ENCODE measurements at regions of chr15 and their contacts with region 1.

Region 1: DNA sequence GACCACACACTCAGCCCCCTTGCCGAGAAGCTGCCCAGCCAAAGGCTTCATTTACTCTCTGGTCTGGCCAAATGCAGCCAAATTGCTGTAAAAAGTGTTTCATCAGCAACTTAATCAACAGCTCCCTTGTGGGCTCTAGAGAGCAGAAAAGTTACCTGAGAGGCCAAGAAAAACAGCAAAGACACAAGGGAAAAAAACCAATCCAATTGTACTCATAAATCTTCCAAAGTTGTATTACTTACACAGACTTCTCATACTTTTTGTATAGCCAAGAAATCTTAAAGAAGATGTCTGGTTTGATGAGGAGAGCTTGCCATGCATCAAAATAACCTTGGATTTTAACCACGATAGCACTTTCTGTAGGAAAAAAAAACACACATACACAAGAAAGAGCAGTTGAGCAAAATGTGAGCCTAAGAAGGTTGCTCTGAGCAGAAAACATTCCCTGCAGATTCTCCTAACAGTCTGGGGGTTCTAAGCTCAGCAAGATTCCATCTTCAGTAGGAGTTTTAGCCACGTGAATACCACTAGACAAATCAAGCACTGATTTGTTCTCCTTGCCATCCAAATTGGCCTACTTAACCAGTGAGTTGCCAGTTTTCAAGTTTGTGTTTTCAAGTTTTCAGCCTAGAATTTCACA is 120.0 kb downstream of the CYP19A1 start:
- H3K4me3 ChIP-seq: no peak overlapping the region
- H3K27ac ChIP-seq: no peak overlapping the region
- H3K4me1 ChIP-seq: 0 out of 2 replicates have a peak, but pooled peaks cover 4% of the 10 kb centered on the region
- CTCF ChIP-seq: no peak

Region 2: GRCh38 chr15:51192521-51193280 is 25.7 kb before region 1 on chr15:
- CTCF ChIA-PET with region 1: interaction called, 10 read pairs
- POLR2A ChIA-PET with region 1: no interaction called
- H3K4me3 ChIP-seq: no peak overlapping the region
- H3K27ac ChIP-seq: no peak overlapping the region
- H3K4me1 ChIP-seq: no peaks in the 10 kb centered on the region; the same call in 1 of the 2 replicates
- CTCF ChIP-seq: peak; percentile 62; the same call in 1 of the 2 replicates

Measured in HEK293 (cell line).